Cardiac septum (tissue), 1 donor: ENCODE measurements at regions of chr3 and their contacts with region 1.

Region 1: DNA sequence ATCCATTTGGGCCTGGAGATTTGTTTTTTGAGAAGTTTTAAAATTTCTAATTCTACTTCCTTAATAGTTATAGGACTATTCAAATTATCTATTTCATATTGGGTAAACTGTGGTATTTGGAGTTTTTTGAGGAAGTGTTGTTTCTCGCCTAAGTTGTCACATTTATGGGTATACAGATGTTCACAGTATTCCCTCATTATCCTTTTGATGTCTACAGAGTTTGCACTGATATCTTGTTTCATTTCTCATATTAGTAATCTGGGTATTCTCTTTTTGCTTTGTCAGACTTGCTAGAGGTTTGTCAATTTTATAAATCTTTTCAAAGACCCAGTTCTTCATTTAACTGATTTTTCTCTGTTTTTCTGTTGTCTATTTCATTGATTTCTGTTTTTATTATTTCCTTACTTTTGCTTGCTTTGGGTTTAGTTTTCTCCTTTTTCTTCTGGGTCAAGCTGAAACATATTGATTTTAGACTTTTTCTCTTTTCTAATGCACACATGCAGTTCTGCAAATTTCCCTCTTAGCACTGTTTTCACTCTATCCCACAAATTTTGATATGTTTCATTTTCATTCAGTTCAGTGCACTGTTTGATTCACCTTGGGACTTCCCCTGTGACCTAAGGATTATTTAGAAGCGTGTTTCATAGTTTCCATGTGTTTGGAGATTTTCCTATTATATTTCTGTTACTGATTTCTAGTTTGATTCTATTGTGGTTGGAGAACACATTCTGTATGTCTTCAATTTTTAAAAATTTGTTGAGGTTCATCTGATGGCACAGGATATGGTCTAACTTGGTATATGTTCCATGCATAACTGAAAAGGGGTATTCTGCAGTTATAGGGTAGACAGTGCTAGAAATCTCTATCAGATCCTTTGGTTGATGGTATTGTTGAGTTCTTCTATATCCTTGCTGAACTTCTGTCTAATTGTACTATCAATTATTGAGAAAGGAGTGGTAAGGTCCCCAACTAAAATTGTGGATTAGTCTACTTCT is 79.6 kb downstream of the SUMF1 start:
- DNase-seq: no peak

Region 2: GRCh38 chr3:4251412-4251811 is 136.1 kb before region 1 on chr3:
- intact Hi-C with region 1: no loop called
- DNase-seq: no peak

Region 3: DNA sequence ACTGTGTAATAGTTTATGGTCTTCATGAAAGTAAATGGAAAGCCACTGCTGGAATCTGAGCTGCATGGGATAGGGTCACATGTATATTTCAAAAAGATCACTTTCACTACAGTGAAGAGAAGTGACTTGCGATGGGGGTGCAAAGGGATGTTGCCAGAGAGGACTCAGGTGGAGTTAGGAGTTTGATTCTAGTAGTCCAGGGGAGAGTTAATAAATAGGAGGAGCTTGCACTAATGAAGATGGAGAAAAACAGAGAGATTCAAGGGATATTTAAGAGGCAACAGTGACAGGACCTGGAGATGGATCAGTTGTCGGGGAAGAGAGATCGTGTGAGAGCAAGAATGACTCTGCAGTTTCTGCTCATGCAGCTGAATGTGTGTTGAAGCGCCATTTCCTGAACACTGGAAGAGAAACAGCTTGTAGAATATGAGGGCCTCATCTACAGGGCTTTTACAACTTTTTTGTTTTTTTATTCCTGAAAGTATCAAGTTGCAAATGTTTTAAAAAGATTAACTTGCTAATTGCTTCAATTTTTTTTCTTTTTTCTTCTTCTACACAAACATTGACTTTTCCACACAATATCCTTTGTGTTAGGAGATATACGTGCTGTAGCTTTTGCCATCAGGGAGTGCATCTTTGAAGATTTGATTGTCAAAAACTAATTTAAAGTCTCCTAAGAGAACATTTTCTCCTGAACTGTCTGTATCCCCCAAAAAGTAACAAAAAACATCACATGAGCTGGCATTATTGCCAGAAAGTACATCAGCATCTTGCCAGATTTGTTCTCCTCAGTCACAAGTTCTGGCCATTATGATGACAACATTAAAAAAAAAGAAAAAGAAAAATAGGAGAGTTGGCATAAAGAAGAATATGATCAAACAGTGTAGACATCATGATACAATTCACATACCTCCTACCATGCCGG is 46.8 kb before region 1 on chr3:
- intact Hi-C with region 1: loop called (anchors 2 kb)
- DNase-seq: no peak